ENCODE measurements at regions of chr11 and their contacts with region 1.

Region 1: GRCh38 chr11:119728651-119729580 is at the start of gene NECTIN1:
- DNase-seq: peak; percentile 60
- ATAC-seq: peak; percentile 83
- H3K4me3 ChIP-seq: peak within 1 kb of the TSS; percentile 82 to 94
- H3K27ac ChIP-seq: peak within 1 kb of the TSS; percentile 85
- H3K4me1 ChIP-seq: peaks cover 14 to 28% of the 10 kb centered on the region in 2 experiments
- H3K27me3 ChIP-seq: no peaks in the 10 kb centered on the region
- CTCF ChIP-seq: peak; percentile 80 to 90 (median 81)
- POLR2A ChIP-seq: peak; percentile 89
- RAD21 ChIP-seq: peak; percentile 92
- total RNA-seq, gene NECTIN1: 23.8 TPM

Region 2: DNA sequence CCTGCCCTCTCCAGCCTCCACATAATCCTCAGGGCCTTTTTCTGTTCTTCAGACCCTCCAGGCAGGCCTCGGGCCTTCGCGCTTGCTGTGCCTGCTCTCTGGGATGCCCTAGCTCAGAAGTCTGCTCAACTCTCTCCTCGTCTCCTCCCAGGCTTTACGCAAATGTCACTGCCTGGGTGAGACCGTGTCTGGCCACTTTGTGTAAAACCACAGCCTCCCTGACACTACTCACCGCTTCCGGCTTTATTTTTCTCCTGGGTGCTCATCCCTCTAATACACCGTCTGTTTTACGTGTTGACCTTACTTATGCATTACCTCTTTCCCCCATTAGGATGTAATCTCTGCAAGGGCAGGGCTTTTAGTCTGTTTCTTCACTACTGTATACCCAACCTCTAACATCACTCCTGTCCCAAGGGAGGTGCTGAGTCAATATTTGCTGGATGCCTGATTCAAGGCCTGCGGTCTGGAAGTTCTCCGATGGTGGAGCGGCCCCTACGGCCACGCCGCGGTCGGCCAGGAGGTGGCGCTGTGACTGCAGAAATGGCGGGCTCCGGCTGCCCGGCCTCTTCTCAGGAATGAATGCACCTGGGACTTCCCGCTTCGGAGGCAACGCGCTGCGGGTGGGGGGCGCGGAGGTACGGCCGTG is 247.8 kb before region 1 on chr11:
- CTCF ChIA-PET with region 1: no interaction called
- POLR2A ChIA-PET with region 1: no interaction called
- RAD21 ChIA-PET with region 1: no interaction called
- intact Hi-C with region 1: loop called (anchors 10 kb)
- DNase-seq: no peak
- ATAC-seq: peak; percentile 86
- H3K4me3 ChIP-seq: no peak overlapping the region
- H3K27ac ChIP-seq: no peak overlapping the region
- H3K4me1 ChIP-seq: peaks cover 3 to 22% of the 10 kb centered on the region in 2 experiments; a peak in 3 of 4 replicates
- H3K27me3 ChIP-seq: no peaks in the 10 kb centered on the region
- CTCF ChIP-seq: peak; percentile 93 to 99 (median 96)
- POLR2A ChIP-seq: no peak
- RAD21 ChIP-seq: peak; percentile 98

Region 3: DNA sequence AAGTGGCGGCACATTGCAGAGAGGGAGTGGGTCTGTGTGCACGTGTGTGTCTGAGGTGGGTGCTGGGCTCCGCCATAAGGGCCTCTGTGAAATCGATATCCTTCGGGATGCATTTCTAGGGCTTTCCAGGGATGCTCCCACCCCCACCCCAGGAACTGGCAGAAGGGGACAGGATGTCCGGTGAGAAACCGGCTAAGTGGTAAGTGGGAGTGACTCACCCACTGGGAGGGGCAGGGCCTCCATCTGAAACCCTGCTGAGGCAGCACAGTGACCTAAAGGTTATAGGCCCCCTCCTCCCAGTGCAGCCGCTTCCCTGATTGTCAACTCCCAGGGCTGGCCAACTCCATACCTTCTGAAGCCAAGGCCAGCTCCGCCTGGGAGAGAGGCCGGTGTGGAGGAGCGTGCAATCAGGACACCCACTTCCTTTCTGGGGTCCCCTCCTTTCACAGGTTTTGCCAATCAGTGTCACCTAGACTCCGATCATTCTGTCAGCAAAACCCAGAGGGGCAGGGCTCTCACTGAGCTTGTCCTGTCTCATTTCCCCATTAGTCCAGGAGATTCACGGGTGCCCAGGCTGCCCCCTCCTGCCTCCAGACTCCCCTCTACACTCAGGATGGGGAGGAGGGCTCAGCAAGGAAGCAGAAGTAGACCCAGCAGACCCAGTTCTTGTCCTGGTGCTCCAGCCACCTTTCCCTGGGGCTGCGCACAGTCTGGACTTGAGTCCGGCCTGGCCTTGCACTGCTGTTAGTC is 44.4 kb before region 1 on chr11:
- CTCF ChIA-PET with region 1: interaction called, 9 read pairs
- POLR2A ChIA-PET with region 1: no interaction called
- RAD21 ChIA-PET with region 1: no interaction called
- intact Hi-C with region 1: loop called (anchors 5 kb)
- DNase-seq: no peak
- ATAC-seq: peak; percentile 80
- H3K4me3 ChIP-seq: peak overlapping the region in 1 of 2 experiments; percentile 16; a peak in 1 of 4 replicates
- H3K27ac ChIP-seq: peak overlapping the region; percentile 33; the same call in 1 of the 2 replicates
- H3K4me1 ChIP-seq: peaks cover 18 to 40% of the 10 kb centered on the region in 2 experiments; a peak in 3 of 4 replicates
- H3K27me3 ChIP-seq: no peaks in the 10 kb centered on the region
- CTCF ChIP-seq: no peak
- POLR2A ChIP-seq: no peak
- RAD21 ChIP-seq: no peak

Region 4: GRCh38 chr11:119774172-119774763 is 45.4 kb after region 1 on chr11:
- CTCF ChIA-PET with region 1: no interaction called
- POLR2A ChIA-PET with region 1: no interaction called
- RAD21 ChIA-PET with region 1: no interaction called
- intact Hi-C with region 1: no loop called
- DNase-seq: no peak
- ATAC-seq: no peak
- H3K4me3 ChIP-seq: no peak overlapping the region
- H3K27ac ChIP-seq: no peak overlapping the region
- H3K4me1 ChIP-seq: no peaks in the 10 kb centered on the region
- H3K27me3 ChIP-seq: peaks cover 35% of the 10 kb centered on the region
- CTCF ChIP-seq: no peak
- POLR2A ChIP-seq: no peak
- RAD21 ChIP-seq: no peak

Measured in HCT116 (cell line).